Left cardiac atrium (tissue), 4 donors: ENCODE measurements at regions of chr19 and their contacts with region 1.

Region 1: DNA sequence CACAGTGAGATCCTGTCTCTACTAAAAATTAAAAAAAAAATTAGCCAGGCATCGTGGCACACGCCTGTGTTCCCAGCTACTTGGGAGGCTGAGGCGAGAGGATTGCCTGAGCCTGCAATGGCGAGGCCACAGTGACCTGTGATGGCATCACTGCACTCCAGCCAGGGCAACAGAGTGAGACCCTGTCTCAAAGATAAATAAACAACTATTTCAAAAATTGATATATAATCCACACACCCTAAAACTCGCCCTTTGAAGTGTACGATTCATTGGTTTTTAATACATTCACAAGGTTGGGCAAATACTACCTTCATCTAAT is 12.1 kb upstream of the TICAM1 start:
- DNase-seq: no peak
- ATAC-seq: no peak

Region 2: DNA sequence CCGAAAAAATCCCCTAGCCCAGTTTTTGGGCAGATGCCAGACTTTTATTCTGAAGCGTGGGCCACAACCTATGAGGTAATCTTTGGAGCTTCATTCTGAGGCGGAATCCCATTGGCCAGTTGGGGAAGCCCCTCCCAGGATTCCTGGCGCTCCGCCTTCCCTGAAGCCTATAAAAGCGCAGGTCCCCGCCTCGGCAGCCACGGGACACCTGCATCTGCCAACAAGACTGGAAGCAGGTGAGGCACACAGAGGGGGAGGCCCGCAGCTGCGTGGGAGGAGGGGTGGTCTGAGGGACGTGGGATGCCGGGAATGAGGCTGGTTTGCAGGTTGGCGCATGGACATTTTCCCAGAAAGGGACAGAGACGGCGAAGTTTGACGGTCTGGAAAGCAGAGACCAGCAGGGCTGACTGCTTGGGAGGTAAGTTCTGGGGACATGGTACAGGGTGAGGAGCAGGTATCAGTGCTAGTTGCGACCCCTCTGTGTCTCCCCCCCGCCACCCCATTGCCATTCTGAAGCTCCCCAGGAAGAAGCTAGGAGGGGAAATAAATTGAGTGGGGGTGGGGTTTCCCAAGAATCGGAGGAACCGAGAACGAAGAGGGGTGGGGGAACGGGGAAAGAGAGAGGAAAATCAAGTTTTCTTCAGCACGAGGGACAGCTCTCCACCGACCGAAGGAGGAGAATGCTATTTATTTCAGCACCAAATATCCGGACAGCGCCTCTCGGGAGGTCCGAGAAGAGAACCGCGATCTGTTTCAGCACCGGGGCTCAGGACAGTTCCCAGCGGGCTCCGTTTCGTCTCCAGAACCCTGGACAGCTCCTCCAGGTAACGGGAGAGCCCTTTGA is 74.5 kb before region 1 on chr19:
- intact Hi-C with region 1: no loop called
- DNase-seq: peak; percentile 81
- ATAC-seq: peak; percentile 83 to 84

Region 3: GRCh38 chr19:4861077-4861543 is 17.5 kb after region 1 on chr19:
- intact Hi-C with region 1: loop called in 1 of 2 experiments (anchors 1 kb)
- DNase-seq: no peak
- ATAC-seq: peak in 1 of 2 donors; percentile 19

Region 4: GRCh38 chr19:4877753-4878490 is 34.3 kb after region 1 on chr19:
- intact Hi-C with region 1: no loop called
- DNase-seq: peak; percentile 23
- ATAC-seq: peak; percentile 63 to 82